ENCODE measurements at regions of chr12 and their contacts with region 1.

Region 1: DNA sequence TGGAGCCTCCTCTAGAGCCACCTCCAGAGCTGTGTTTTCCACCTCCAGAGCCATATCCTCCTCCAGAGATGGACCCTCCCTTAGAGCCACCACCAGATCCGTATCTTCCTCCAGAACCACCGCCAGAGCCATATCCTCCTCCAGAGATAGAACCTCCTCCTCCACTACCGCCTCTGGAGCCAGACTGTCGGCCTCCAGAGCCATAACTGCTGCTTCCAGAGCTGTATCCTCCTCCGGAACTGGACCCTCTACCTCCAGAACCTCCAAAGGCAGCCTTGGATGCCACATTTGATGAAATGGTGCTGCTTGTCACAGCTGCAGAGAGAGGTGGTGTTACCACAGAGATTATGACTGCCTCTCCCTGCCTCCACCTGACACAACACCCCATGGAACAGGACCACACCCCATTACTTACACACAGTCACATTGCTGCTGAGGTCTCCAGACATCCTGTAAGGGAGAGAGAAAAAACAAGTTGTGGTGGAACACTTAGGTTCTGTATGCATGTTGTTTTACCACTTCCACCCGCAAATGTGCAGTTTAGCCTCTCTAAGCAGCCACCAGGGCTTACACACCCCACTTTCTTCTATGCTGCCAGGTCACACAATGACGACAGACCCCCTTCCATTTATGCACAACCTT is 6.8 kb downstream of the KRT2 start:
- DNase-seq: peak; percentile 67
- H3K4me3 Mint-ChIP-seq: peak overlapping the region; percentile 64
- H3K27ac Mint-ChIP-seq: peak overlapping the region; percentile 83
- H3K4me1 Mint-ChIP-seq: peaks cover 67% of the 10 kb centered on the region
- H3K27me3 Mint-ChIP-seq: peaks cover 7% of the 10 kb centered on the region

Region 2: GRCh38 chr12:52615208-52615868 is 29.9 kb before region 1 on chr12:
- intact Hi-C with region 1: loop called (anchors 1 kb)
- DNase-seq: no peak
- H3K4me3 Mint-ChIP-seq: no peak overlapping the region
- H3K27ac Mint-ChIP-seq: no peak overlapping the region
- H3K4me1 Mint-ChIP-seq: peaks cover 64% of the 10 kb centered on the region
- H3K27me3 Mint-ChIP-seq: no peaks in the 10 kb centered on the region

Region 3: GRCh38 chr12:52655720-52656124 is 10.5 kb after region 1 on chr12:
- intact Hi-C with region 1: no loop called
- DNase-seq: no peak
- H3K4me3 Mint-ChIP-seq: no peak overlapping the region
- H3K27ac Mint-ChIP-seq: no peak overlapping the region
- H3K4me1 Mint-ChIP-seq: no peaks in the 10 kb centered on the region
- H3K27me3 Mint-ChIP-seq: peaks cover 28% of the 10 kb centered on the region